Endothelial cell of umbilical vein (primary cell): ENCODE measurements at regions of chr2 and their contacts with region 1.

Region 1: DNA sequence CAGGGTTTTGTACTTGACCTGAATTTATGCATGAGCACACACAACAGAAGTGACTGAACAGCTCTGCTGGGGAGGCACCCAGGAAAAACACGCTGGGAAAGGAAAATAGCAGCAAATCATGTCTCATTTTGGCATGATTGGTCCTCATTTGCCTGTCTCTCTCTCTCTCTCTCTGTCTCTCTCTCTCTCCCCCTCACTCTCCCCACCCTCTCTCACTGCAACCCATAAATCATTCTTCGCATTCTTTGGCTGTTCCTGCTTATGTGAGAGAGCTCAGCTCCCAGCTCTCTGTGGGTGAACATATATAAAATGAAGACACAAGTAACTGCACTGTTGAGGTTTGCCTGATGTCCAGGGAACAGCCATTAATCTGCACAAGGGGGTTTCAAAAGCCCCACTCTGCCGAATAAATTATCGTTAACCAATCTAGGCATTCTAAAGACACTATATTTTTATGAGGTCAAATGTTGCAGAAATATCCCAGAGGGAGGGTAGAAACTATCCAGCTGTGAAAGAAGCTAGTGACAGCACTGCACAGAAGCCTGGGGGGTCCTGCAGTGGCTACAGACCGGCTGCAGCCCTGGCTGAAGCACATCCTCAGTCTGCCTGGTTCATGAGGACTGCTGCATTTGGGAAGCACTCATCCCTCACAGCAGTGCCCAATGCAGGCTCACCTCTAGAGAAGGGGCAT is 260.3 kb downstream of the AFF3 start:
- DNase-seq: peak; percentile 71
- H3K4me3 ChIP-seq: no peak overlapping the region
- H3K27ac ChIP-seq: peak overlapping the region; percentile 52
- H3K4me1 ChIP-seq: peaks cover 55% of the 10 kb centered on the region
- H3K27me3 ChIP-seq: no peaks in the 10 kb centered on the region
- CTCF ChIP-seq: no peak
- POLR2A ChIP-seq: no peak

Region 2: DNA sequence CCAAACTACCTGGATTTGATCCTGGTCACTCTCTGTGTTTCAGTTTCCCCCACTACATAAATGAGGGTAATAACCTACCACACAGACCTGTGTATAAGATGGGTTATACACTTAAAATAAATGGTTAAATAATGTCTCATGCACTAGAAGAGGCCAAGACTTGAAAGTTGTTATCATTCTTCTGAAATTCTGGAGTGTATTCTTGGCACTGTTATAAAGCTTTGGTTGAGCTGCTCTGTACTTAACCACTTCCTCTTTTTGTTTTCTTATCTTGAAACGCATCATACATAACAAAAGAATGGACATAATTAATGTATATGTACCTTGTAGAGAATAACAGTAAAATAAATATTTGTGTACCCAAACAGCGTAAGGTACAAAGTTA is 20.7 kb before region 1 on chr2:
- CTCF ChIA-PET with region 1: interaction called, 9 read pairs
- POLR2A ChIA-PET with region 1: no interaction called
- dilution Hi-C with region 1: no loop called
- intact Hi-C with region 1: loop called (anchors 1 kb)
- DNase-seq: peak; percentile 63
- H3K4me3 ChIP-seq: no peak overlapping the region
- H3K27ac ChIP-seq: peak overlapping the region; percentile 82
- H3K4me1 ChIP-seq: peaks cover 30% of the 10 kb centered on the region
- H3K27me3 ChIP-seq: no peaks in the 10 kb centered on the region
- CTCF ChIP-seq: no peak
- POLR2A ChIP-seq: no peak

Region 3: DNA sequence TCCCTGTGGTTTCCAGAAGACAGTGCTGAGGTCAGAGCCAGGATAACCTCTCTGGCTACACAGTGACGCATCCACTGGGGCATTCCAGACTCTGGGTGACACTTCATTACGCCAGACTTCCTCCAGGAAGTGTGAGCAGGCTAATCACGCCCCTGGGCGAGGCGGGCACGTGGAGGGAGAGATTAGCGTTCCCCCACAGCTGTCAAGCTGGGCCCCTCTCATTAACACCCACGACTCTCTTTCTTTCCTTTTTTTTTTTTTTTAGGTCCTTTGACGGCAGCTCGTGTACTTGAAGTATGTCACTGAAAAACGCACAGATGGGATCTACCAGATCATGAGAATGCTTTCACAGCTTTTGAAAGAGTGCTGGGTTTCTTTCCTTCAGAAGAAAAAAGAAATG is 14.3 kb before region 1 on chr2:
- CTCF ChIA-PET with region 1: interaction called, 9 read pairs
- POLR2A ChIA-PET with region 1: no interaction called
- dilution Hi-C with region 1: no loop called
- intact Hi-C with region 1: loop called (anchors 1 kb)
- DNase-seq: peak; percentile 73
- H3K4me3 ChIP-seq: no peak overlapping the region
- H3K27ac ChIP-seq: peak overlapping the region; percentile 55
- H3K4me1 ChIP-seq: peaks cover 13% of the 10 kb centered on the region
- H3K27me3 ChIP-seq: no peaks in the 10 kb centered on the region
- CTCF ChIP-seq: no peak
- POLR2A ChIP-seq: no peak

Region 4: DNA sequence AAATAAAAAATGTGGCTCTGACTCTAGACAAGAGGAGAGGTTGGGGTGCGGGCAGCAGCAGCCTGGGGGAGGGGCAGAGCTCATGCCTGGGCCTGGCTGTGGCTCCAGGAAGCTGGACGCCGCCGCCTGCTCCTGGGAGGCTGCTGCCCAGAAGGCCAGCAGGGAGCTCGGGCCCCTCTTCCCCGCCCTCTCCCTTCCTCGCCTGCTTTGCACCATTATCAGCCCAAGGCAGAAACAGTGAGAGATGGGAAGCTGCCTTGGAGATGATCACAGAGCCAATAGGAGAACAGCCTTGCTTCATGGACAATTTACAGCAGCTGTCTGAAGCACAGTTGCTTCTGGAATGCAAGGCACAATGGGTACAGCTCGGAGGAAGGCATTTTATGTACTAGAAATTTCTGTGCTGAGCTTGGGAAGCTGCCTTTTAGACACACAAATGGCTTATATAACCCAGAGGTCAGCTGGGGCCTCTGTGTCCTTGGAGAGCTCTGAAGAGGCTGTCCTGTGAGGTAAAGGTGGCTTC is 315.6 kb after region 1 on chr2:
- CTCF ChIA-PET with region 1: no interaction called
- POLR2A ChIA-PET with region 1: no interaction called
- dilution Hi-C with region 1: no loop called
- intact Hi-C with region 1: loop called (anchors 5 kb)
- DNase-seq: peak; percentile 66
- H3K4me3 ChIP-seq: no peak overlapping the region
- H3K27ac ChIP-seq: peak overlapping the region; percentile 60
- H3K4me1 ChIP-seq: peaks cover 51% of the 10 kb centered on the region
- H3K27me3 ChIP-seq: no peaks in the 10 kb centered on the region
- CTCF ChIP-seq: no peak
- POLR2A ChIP-seq: no peak